Activated naive CD4-positive, alpha-beta T cell treated with anti-CD3 and anti-CD28 coated beads for 36 hours (primary cell): ENCODE measurements at regions of chr15 and their contacts with region 1.

Region 1: GRCh38 chr15:38671675-38672254 is 107.2 kb upstream of the RASGRP1 start:
- DNase-seq: peak; percentile 69
- H3K4me3 Mint-ChIP-seq: peak overlapping the region; percentile 54
- H3K27ac Mint-ChIP-seq: peak overlapping the region; percentile 94
- H3K4me1 Mint-ChIP-seq: peaks cover 69% of the 10 kb centered on the region
- H3K27me3 Mint-ChIP-seq: no peaks in the 10 kb centered on the region

Region 2: GRCh38 chr15:38530113-38530512 is 141.7 kb before region 1 on chr15:
- CTCF ChIA-PET with region 1: interaction called, 5 read pairs
- intact Hi-C with region 1: loop called (anchors 1 kb)
- DNase-seq: peak; percentile 75
- H3K4me3 Mint-ChIP-seq: no peak overlapping the region
- H3K27ac Mint-ChIP-seq: peak overlapping the region; percentile 80
- H3K4me1 Mint-ChIP-seq: peaks cover 86% of the 10 kb centered on the region
- H3K27me3 Mint-ChIP-seq: no peaks in the 10 kb centered on the region

Region 3: GRCh38 chr15:38631126-38632075 is 40.4 kb before region 1 on chr15:
- CTCF ChIA-PET with region 1: no interaction called
- intact Hi-C with region 1: loop called (anchors 1 kb)
- DNase-seq: peak; percentile 27
- H3K4me3 Mint-ChIP-seq: peak overlapping the region; percentile 30
- H3K27ac Mint-ChIP-seq: peak overlapping the region; percentile 85
- H3K4me1 Mint-ChIP-seq: peaks cover 50% of the 10 kb centered on the region
- H3K27me3 Mint-ChIP-seq: no peaks in the 10 kb centered on the region

Region 4: DNA sequence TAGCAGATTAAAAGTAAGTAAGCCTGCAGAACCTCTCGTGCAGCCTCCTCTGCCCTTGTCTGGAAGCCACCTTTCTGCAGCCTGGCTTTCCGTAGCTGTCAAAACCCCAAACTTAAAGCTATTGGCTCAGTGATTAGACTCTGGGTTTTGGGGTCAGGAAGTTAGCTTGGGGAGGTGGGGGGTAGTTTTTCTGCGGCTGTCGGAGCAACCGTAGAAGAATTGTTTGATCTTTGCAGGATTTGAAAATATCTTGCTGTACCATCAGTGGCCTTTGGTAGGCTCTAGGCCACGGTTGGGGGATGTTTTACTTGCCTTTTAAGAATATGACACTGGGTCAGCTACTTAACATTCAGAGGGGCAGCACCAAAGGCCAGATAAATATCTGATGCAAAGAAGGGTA is 18.8 kb before region 1 on chr15:
- CTCF ChIA-PET with region 1: interaction called, 9 read pairs
- intact Hi-C with region 1: loop called (anchors 1 kb)
- DNase-seq: peak; percentile 74
- H3K4me3 Mint-ChIP-seq: peak overlapping the region; percentile 66
- H3K27ac Mint-ChIP-seq: peak overlapping the region; percentile 81
- H3K4me1 Mint-ChIP-seq: peaks cover 70% of the 10 kb centered on the region
- H3K27me3 Mint-ChIP-seq: no peaks in the 10 kb centered on the region

Region 5: GRCh38 chr15:38660738-38661137 is 11.0 kb before region 1 on chr15:
- CTCF ChIA-PET with region 1: interaction called, 5 read pairs
- intact Hi-C with region 1: loop called (anchors 1 kb)
- DNase-seq: peak; percentile 66
- H3K4me3 Mint-ChIP-seq: peak overlapping the region; percentile 37
- H3K27ac Mint-ChIP-seq: peak overlapping the region; percentile 71
- H3K4me1 Mint-ChIP-seq: peaks cover 73% of the 10 kb centered on the region
- H3K27me3 Mint-ChIP-seq: no peaks in the 10 kb centered on the region